ENCODE measurements at regions of chr6 and their contacts with region 1.

Region 1: GRCh38 chr6:43496370-43497128 is 13.6 kb downstream of the LRRC73 start:
- DNase-seq: peak; percentile 88
- H3K4me3 Mint-ChIP-seq: peak overlapping the region; percentile 43
- H3K27ac Mint-ChIP-seq: peak overlapping the region; percentile 88
- H3K4me1 Mint-ChIP-seq: peaks cover 53% of the 10 kb centered on the region
- H3K27me3 Mint-ChIP-seq: no peaks in the 10 kb centered on the region
- CTCF ChIP-seq: peak; percentile 91

Region 2: GRCh38 chr6:43369174-43370022 is 127.2 kb before region 1 on chr6 and contains the start of gene ZNF318:
- CTCF ChIA-PET with region 1: interaction called, 9 read pairs
- POLR2A ChIA-PET with region 1: interaction called, 27 read pairs
- intact Hi-C with region 1: loop called (anchors 5 kb)
- DNase-seq: peak; percentile 97
- H3K4me3 Mint-ChIP-seq: peak within 1 kb of the TSS; percentile 80
- H3K27ac Mint-ChIP-seq: peak within 1 kb of the TSS; percentile 93
- H3K4me1 Mint-ChIP-seq: peaks cover 18% of the 10 kb centered on the region
- H3K27me3 Mint-ChIP-seq: no peaks in the 10 kb centered on the region
- CTCF ChIP-seq: no peak
- total RNA-seq, gene ZNF318: 11.3 and 12.9 TPM in 2 replicates

Region 3: DNA sequence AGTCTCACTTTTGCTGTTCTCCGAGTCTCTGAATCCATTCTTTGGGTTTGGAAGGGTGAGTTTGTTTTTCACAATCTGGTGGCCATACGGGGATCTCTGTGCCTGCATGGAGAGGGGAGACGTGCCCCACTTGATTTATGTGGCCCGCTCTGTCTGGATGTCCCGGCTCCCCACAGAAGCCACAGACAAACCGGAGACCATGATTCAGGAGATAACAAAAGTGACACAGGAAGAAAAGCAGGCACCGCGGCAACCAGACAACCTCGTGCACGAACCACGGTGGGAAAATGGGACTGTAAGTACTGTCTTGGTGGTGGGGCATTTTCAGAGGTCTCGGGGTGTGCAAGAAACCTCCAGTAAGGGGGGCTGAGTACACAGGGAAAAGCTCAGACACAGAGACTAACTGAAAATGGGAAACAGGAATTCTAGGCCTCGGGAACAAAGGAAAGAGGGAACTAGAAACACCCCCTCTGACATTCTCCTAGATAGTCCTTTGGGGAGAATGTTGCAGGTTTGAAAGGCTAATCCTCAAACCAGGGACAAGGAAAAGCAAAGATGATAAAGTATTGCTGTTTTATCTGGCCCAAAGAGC is 105.0 kb before region 1 on chr6:
- CTCF ChIA-PET with region 1: interaction called, 20 read pairs
- POLR2A ChIA-PET with region 1: interaction called, 6 read pairs
- intact Hi-C with region 1: no loop called
- DNase-seq: no peak
- H3K4me3 Mint-ChIP-seq: no peak overlapping the region
- H3K27ac Mint-ChIP-seq: no peak overlapping the region
- H3K4me1 Mint-ChIP-seq: no peaks in the 10 kb centered on the region
- H3K27me3 Mint-ChIP-seq: no peaks in the 10 kb centered on the region
- CTCF ChIP-seq: no peak

Region 4: DNA sequence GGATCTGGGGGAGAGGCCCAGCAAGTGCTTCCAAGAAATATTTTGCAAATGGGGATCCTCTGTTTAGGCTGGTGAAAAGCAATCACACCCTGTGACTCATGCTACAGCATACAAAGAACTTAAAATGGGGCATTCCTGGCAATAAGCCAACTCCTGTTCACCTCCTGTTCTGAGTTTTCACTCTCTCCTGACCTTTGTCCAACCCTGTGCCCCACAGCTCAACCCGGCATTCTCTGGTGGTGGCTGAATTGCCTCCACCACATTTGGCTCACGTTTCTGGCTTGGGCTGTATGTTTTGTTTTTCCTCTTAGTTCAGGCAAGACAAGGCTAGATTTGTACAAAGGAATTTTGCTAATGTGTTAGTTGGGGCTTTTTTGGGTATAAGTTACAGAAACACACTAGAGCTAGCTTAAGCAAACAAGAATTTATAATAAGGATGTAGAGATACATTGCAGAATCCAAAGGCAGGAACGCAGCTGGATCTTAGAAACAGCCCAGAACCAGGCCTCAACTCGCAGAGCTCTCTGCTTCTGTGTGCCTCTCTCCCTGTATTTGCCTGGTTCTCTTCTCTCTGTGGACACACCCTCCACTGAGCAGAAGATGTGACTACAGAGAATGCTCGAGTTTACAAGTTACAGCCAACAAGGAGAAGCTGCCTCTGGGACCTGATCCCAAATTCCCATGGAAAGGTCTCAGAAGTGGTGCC is 59.8 kb before region 1 on chr6:
- CTCF ChIA-PET with region 1: interaction called, 25 read pairs
- POLR2A ChIA-PET with region 1: interaction called, 27 read pairs
- intact Hi-C with region 1: no loop called
- DNase-seq: peak; percentile 95
- H3K4me3 Mint-ChIP-seq: peak overlapping the region; percentile 5
- H3K27ac Mint-ChIP-seq: peak overlapping the region; percentile 92
- H3K4me1 Mint-ChIP-seq: peaks cover 32% of the 10 kb centered on the region
- H3K27me3 Mint-ChIP-seq: no peaks in the 10 kb centered on the region
- CTCF ChIP-seq: no peak

Region 5: DNA sequence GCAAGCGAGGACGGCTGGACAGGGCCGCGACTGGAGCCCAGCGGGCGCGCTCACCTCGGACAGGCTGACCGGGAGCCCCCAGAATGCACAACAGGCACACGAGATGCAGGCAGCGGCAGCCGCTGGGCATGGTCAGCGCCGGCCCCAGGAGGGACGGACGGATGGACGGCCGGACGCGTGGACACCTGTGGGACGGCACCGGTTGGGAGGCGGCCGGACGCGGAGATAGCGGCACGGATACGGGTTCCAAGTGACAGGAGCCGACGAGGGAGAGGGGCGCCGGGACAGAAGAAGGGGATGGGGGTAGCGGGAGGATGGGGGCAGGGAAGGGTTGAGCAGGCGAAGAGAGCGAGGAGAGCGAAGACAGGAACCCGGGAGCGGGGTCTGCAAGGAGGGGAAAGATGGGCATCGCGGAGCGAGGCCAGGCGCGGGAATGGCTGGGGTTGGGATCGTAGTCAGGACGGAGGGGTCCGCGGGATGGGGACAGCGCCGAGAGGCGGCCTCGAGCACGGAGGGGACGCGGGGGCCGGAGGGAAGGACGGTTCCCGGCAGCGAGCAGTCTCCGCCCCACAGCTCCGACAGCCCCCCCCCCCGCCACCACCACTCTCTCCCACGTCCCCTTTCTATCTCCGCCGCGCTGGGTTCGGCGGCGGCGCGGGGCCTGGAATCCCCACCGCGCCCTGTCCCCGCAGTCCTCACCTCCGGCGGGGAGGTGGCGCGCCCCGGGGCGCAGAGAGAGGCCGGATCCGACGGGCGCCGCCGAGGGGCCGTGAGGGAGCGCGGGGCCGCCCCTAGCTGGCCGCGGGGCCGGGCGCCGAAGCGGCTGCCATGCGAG is 41.6 kb before region 1 on chr6:
- CTCF ChIA-PET with region 1: interaction called, 102 read pairs
- POLR2A ChIA-PET with region 1: interaction called, 138 read pairs
- intact Hi-C with region 1: loop called (anchors 1 kb)
- DNase-seq: peak; percentile 78
- H3K4me3 Mint-ChIP-seq: peak overlapping the region; percentile 83
- H3K27ac Mint-ChIP-seq: peak overlapping the region; percentile 27
- H3K4me1 Mint-ChIP-seq: peaks cover 15% of the 10 kb centered on the region
- H3K27me3 Mint-ChIP-seq: no peaks in the 10 kb centered on the region
- CTCF ChIP-seq: no peak

Region 6: DNA sequence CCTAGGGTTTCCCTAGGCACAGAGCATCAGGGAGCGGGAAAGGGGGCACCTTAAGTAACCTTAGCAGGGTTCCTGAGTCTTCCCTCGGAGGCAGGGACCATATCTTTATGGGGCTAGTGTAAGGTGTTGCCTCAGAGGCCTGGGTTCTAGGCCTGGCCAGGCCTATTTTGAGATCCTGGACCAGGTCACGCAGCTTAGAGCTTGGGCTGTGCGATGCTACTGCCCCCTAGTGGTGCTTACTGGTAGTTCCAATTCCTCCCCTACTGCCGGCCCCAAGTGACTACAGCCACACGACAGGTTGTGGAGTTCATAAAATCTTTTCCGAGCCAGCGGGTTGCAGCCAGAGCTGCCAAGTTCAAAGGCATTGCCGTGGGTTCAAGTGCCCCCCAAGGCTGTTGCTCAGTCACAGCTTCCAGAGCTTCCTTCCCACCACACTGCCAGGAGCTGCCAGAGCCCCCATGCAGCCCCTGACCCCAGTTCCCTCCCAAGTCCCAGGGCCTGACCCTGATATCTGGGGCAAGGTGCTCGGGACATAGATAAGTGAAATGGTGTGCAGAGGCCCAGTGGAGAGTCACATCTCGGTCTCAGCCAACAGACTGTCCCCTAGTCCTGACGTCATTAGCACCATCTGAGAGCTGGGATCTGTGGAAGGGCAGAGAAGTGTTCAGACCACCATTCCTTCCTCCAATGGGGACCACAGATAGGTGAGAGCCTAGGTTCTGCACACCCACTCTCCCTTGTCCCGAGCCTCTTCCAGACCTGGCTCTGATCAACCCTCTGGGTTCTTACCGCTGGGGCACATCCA is 10.3 kb after region 1 on chr6:
- CTCF ChIA-PET with region 1: interaction called, 93 read pairs
- POLR2A ChIA-PET with region 1: interaction called, 29 read pairs
- intact Hi-C with region 1: no loop called
- DNase-seq: peak; percentile 80
- H3K4me3 Mint-ChIP-seq: no peak overlapping the region
- H3K27ac Mint-ChIP-seq: no peak overlapping the region
- H3K4me1 Mint-ChIP-seq: peaks cover 11% of the 10 kb centered on the region
- H3K27me3 Mint-ChIP-seq: no peaks in the 10 kb centered on the region
- CTCF ChIP-seq: peak; percentile 94

Region 7: DNA sequence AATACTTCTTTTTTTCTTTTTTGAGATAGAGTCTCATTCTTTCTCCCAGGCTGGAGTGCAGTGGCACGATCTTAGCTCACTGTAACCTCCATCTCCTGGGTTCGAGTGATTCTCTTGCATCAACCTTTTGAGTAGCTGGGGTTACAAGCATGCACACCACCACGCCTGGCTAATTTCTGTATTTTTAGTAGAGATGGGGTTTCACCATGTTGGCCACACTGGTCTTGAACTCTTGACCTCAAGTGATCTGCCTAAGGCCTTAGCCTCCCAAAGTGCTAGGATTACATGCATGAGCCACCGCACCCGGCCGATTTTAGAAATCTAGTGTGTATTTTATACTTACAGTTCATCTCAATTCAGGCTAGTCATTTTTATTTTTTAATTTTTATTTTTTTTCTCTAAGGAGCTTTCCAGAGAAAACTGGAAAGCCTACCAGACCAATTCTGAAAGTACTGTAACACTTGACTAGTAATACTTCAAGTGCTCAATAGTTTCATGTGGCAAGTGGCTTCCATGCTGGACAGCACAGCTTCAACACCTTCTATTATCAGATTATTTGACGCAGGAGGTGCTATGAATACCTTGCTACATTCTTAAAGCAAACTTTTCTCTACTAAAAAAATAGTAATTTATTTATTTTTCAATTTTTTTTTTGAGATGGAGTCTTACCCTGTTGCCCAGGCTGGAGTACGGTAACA is 45.4 kb after region 1 on chr6:
- CTCF ChIA-PET with region 1: no interaction called
- POLR2A ChIA-PET with region 1: no interaction called
- intact Hi-C with region 1: no loop called
- DNase-seq: no peak
- H3K4me3 Mint-ChIP-seq: no peak overlapping the region
- H3K27ac Mint-ChIP-seq: no peak overlapping the region
- H3K4me1 Mint-ChIP-seq: peaks cover 9% of the 10 kb centered on the region
- H3K27me3 Mint-ChIP-seq: no peaks in the 10 kb centered on the region
- CTCF ChIP-seq: no peak

Region 8: DNA sequence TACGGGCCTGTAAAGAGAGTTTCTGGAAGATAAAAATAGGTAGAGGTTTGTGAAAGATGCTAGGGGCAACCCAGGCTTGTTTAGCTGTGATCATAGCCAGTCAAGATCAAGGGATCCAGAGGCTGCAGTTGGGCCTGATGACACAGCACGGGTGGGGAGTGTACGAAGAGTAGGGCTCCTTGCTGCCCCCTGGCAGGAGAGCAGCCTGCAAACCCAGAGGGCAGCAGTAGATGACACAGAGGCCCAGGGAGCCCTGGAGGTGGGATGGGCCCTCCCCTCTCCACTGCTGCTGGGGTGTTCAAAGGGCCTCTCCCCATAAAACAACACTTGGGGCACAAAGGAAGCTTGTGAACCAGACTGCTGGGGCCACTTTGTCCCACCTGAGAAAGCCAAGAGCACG is 320.6 kb after region 1 on chr6:
- CTCF ChIA-PET with region 1: no interaction called
- POLR2A ChIA-PET with region 1: no interaction called
- intact Hi-C with region 1: no loop called
- DNase-seq: peak; percentile 35
- H3K4me3 Mint-ChIP-seq: no peak overlapping the region
- H3K27ac Mint-ChIP-seq: no peak overlapping the region
- H3K4me1 Mint-ChIP-seq: peaks cover 5% of the 10 kb centered on the region
- H3K27me3 Mint-ChIP-seq: peaks cover 15% of the 10 kb centered on the region
- CTCF ChIP-seq: no peak